ENCODE measurements at regions of chr7 and their contacts with region 1.

Region 1: GRCh38 chr7:25851332-25852210 is 300.4 kb upstream of the NFE2L3 start:
- DNase-seq: peak; percentile 88
- ATAC-seq: peak; percentile 62
- H3K4me3 Mint-ChIP-seq: peak overlapping the region; percentile 74
- H3K27ac Mint-ChIP-seq: no peak overlapping the region
- H3K4me1 Mint-ChIP-seq: peaks cover 18% of the 10 kb centered on the region
- H3K27me3 Mint-ChIP-seq: peaks cover 37% of the 10 kb centered on the region
- CTCF ChIP-seq: peak; percentile 86

Region 2: GRCh38 chr7:25565949-25566348 is 285.6 kb before region 1 on chr7:
- CTCF ChIA-PET with region 1: interaction called, 74 read pairs
- POLR2A ChIA-PET with region 1: no interaction called
- DNase-seq: peak; percentile 49
- ATAC-seq: no peak
- H3K4me3 Mint-ChIP-seq: no peak overlapping the region
- H3K27ac Mint-ChIP-seq: no peak overlapping the region
- H3K4me1 Mint-ChIP-seq: peaks cover 3% of the 10 kb centered on the region; the same call in 1 of the 2 replicates
- H3K27me3 Mint-ChIP-seq: no peaks in the 10 kb centered on the region; the same call in 1 of the 2 replicates
- CTCF ChIP-seq: peak; percentile 100

Region 3: GRCh38 chr7:25586513-25586912 is 265.1 kb before region 1 on chr7:
- CTCF ChIA-PET with region 1: interaction called, 11 read pairs
- POLR2A ChIA-PET with region 1: no interaction called
- DNase-seq: no peak
- ATAC-seq: no peak
- H3K4me3 Mint-ChIP-seq: no peak overlapping the region
- H3K27ac Mint-ChIP-seq: no peak overlapping the region
- H3K4me1 Mint-ChIP-seq: peaks cover 10% of the 10 kb centered on the region
- H3K27me3 Mint-ChIP-seq: no peaks in the 10 kb centered on the region; the same call in none of the 2 replicates
- CTCF ChIP-seq: no peak

Region 4: GRCh38 chr7:25611196-25611595 is 240.4 kb before region 1 on chr7:
- CTCF ChIA-PET with region 1: no interaction called
- POLR2A ChIA-PET with region 1: no interaction called
- DNase-seq: no peak
- ATAC-seq: no peak
- H3K4me3 Mint-ChIP-seq: no peak overlapping the region
- H3K27ac Mint-ChIP-seq: no peak overlapping the region
- H3K4me1 Mint-ChIP-seq: no peaks in the 10 kb centered on the region
- H3K27me3 Mint-ChIP-seq: no peaks in the 10 kb centered on the region; the same call in none of the 2 replicates
- CTCF ChIP-seq: no peak

Region 5: DNA sequence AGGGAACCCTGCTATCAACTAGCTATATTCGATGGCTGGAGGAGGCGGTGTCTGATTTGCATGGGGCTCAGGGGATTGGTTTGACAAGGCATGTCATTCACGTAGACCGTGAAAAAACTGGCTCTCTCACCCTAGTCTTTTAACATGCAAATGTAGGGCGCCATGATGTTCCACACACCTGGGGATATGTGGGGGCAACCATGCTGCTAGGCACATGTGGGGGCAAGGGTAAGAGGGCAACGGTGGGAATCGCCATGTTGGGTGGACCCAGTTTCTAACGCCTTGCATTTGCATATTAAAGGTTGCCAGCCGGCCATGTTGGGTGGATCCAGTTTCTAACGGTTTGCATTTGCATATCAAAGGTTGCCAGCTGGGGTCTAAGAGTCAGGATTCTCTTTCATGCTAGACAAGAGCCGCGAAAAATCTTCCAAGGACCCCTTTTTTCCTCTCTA is 118.8 kb before region 1 on chr7:
- CTCF ChIA-PET with region 1: interaction called, 16 read pairs
- POLR2A ChIA-PET with region 1: no interaction called
- DNase-seq: peak; percentile 74
- ATAC-seq: peak; percentile 88
- H3K4me3 Mint-ChIP-seq: peak overlapping the region; percentile 21; the same call in 1 of the 2 replicates
- H3K27ac Mint-ChIP-seq: no peak overlapping the region
- H3K4me1 Mint-ChIP-seq: peaks cover 27% of the 10 kb centered on the region
- H3K27me3 Mint-ChIP-seq: peaks cover 4% of the 10 kb centered on the region
- CTCF ChIP-seq: no peak

Region 6: DNA sequence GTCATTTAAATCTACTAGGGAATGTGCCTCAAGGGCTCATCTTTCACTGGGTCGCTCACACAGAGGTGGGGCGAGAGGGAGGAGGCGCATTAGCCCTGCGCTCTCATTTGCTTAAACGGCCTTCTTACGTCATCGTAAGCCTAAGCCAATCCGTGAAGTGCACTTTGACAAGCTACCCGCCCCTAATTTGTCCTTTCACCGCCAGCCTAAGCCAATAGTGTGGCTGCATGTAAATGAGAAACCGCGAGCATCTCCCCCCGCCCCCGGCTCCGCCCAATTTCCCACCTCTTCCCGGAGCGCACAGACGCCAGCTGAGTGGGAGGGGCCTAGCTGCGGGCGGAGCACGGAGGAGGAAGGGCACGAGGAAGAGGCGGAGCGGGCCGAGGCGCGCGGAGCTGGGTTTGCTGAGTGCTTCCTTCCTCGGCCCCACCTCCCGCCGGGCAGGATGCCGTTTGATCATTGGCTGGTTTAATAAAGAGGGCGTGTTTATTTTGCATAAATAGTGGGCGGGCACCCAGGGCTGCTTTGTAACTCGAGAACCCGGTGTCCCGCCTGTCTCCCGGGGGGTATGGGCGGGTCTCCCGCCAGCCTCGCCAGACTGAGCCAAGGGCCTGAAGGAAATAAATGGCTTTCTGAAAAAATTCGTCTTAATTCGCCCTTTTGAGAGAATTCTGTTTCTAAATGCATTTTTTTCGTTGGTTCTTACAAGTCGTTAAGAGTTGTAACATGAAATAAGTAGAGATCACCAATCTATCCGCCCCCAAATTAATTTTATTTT is 10.9 kb after region 1 on chr7:
- CTCF ChIA-PET with region 1: interaction called, 14 read pairs
- POLR2A ChIA-PET with region 1: no interaction called
- DNase-seq: peak; percentile 100
- ATAC-seq: peak; percentile 90
- H3K4me3 Mint-ChIP-seq: peak overlapping the region; percentile 32
- H3K27ac Mint-ChIP-seq: no peak overlapping the region
- H3K4me1 Mint-ChIP-seq: peaks cover 61% of the 10 kb centered on the region
- H3K27me3 Mint-ChIP-seq: peaks cover 26% of the 10 kb centered on the region
- CTCF ChIP-seq: no peak

Region 7: GRCh38 chr7:26117142-26117807 is 265.7 kb after region 1 on chr7:
- CTCF ChIA-PET with region 1: no interaction called
- POLR2A ChIA-PET with region 1: no interaction called
- DNase-seq: peak; percentile 20
- ATAC-seq: peak; percentile 76
- H3K4me3 Mint-ChIP-seq: no peak overlapping the region
- H3K27ac Mint-ChIP-seq: no peak overlapping the region
- H3K4me1 Mint-ChIP-seq: peaks cover 19% of the 10 kb centered on the region
- H3K27me3 Mint-ChIP-seq: no peaks in the 10 kb centered on the region
- CTCF ChIP-seq: no peak

Measured in WTC11 (cell line).